Aorta (tissue), 5 donors: ENCODE measurements at regions of chr15 and their contacts with region 1.

Region 1: DNA sequence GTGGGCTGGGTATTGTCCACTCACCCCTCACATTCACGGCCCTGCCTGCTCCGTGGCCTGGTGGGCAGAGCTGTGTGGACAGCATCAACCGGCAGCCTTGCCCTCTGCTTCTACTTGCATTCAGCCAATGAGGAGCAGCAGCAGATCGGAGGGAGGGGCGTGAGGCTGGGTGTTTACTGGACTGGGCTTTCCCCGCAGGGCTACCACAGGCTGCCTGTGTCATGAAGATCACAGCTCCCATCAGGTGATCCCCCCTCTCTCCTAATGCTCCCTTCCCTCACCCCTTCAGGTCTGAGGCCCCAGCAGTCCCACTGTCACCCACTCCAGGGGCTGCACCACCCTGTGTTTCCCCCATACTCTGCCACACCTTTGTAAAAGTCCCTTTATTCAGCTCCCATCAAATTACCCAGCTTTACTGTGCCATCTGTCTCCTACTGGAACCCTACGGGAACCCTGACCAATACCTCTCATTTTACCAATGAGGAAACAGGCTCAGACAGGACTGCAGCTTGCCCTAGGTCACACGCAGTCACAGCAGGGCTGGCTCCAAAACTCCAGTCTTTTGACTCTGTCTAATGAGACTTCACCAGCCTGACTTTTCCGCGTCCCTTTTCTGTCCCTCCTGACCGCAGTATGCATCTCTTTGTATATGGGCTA is 81.1 kb downstream of the MEGF11 start:
- DNase-seq: peak in 1 of 2 donors; percentile 39
- ATAC-seq: no peak
- H3K4me3 ChIP-seq: no peak overlapping the region
- H3K27ac ChIP-seq: no peak overlapping the region
- H3K4me1 ChIP-seq: no peaks in the 10 kb centered on the region
- H3K27me3 ChIP-seq: no peaks in the 10 kb centered on the region

Region 2: DNA sequence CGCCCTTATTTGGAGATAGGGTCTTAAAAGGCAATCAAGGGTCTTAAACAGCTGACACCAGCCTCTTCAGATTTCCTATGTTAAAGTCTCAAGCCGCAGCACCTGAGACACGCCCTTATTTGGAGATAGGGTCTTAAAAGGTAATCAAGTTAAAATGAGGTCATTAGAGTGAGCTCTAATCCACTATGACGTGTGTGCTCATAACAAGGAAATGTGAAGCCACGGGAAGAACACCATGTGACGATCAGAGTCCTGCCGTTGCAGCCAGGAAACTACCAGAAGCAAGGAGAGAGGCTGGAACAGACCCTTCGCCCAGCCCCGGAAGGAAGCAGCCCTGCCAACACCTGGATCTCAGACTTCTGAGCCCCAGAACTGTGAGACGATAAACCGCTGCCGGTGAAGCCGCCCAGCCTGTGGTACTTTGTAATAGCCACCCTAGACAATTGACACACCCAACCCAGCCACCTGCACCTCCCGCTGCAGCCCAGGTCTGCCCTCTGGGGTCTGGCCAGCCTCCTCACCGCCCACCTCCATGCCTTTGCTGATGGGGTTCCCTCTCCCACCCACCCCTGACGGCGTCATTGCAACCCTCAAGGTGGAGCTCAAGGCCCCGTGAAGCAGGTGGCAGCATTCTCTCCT is 56.8 kb before region 1 on chr15:
- intact Hi-C with region 1: no loop called
- DNase-seq: no peak
- ATAC-seq: no peak
- H3K4me3 ChIP-seq: no peak overlapping the region
- H3K27ac ChIP-seq: no peak overlapping the region
- H3K4me1 ChIP-seq: no peaks in the 10 kb centered on the region
- H3K27me3 ChIP-seq: no peaks in the 10 kb centered on the region

Region 3: DNA sequence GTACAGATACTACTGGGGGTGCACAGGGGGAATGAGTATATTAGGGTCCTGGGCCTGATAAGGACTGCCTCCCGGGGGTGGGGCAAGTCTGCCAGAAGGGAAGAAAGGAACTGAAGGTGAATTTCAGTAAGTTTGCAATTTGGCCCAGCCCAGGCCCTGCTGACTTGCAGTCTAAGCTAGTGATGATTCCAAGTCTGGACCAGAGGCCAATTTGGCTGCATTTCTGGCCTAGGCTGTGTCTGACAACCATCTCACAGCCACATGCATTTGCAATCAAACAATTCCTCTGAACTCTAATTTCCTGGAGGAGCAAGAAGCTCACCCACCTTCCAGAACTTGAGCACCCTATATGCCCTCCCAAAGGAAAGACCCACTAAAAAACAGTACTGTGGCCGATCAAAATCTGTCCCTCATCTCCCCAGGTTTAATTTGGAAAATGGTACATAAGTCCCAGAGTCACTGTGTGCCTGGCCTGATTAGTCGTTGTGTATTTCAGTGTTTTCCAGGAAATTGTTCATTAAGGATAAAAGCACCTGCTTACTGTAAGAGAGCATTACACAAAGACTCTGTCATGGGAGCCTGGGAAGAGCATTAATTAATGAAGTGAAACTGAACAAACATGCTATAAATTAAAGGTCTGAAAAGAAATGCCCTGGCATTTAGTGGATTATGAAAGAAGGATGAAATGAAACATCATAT is 33.4 kb before region 1 on chr15:
- intact Hi-C with region 1: loop called in 1 of 2 experiments (anchors 1 kb)
- DNase-seq: no peak
- ATAC-seq: no peak
- H3K4me3 ChIP-seq: no peak overlapping the region
- H3K27ac ChIP-seq: no peak overlapping the region
- H3K4me1 ChIP-seq: no peaks in the 10 kb centered on the region
- H3K27me3 ChIP-seq: no peaks in the 10 kb centered on the region